ENCODE measurements at regions of chr19 and their contacts with region 1.

Region 1: GRCh38 chr19:45178262-45179071 is at the start of gene BLOC1S3:
- DNase-seq: peak; percentile 100
- ATAC-seq: peak; percentile 96 to 98 (median 98)
- H3K4me3 ChIP-seq: peak within 1 kb of the TSS; percentile 62 to 96 (median 83)
- H3K27ac ChIP-seq: peak within 1 kb of the TSS; percentile 55 to 93 (median 87)
- H3K4me1 ChIP-seq: peaks cover 3 to 43% (median 31%) of the 10 kb centered on the region in 9 donors
- H3K27me3 ChIP-seq: no peaks in the 10 kb centered on the region
- CTCF ChIP-seq: peak in 8 of 9 donors; percentile 44 to 72 (median 53)
- total RNA-seq, gene BLOC1S3: 2.8 to 8.6 (median 4.8) TPM

Region 2: DNA sequence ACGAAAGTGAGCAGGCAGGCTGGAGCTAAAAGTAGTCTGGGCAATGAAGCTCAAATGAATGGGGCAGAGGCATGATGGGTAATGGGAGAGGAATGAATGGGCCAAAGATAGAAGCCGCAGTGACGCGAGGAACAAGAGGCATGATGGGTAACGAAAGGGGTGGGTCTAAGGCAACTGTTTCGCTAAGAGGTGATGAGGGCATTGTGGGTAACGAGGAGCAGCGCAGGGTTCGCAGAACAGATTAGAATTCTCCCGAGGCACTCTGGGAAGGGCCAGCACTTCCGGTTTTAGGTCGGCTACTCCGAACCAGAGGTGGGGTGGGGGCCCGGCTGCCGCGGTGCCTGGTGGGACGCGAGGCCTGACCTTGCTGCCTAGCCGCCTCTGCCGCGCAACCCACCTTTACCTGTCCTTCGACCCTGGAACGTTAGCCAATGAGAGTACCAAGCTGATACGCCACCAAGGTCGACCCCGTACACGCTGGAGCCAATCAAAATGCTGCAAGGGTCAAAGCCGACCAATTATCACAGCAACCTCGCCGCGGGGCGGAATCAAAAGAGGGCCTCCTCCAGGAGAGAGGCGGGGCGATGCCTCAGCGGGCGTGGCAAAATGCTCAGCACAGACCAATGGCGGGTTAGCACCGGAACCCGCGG is 288.0 kb before region 1 on chr19:
- intact Hi-C with region 1: loop called in 1 of 10 experiments (anchors 10 kb)
- DNase-seq: peak; percentile 100
- ATAC-seq: peak; percentile 88 to 96 (median 94)
- H3K4me3 ChIP-seq: peak overlapping the region; percentile 16 to 87 (median 58)
- H3K27ac ChIP-seq: peak overlapping the region; percentile 81 to 98 (median 92)
- H3K4me1 ChIP-seq: peaks cover 13 to 28% (median 25%) of the 10 kb centered on the region in 9 donors
- H3K27me3 ChIP-seq: no peaks in the 10 kb centered on the region
- CTCF ChIP-seq: no peak

Region 3: DNA sequence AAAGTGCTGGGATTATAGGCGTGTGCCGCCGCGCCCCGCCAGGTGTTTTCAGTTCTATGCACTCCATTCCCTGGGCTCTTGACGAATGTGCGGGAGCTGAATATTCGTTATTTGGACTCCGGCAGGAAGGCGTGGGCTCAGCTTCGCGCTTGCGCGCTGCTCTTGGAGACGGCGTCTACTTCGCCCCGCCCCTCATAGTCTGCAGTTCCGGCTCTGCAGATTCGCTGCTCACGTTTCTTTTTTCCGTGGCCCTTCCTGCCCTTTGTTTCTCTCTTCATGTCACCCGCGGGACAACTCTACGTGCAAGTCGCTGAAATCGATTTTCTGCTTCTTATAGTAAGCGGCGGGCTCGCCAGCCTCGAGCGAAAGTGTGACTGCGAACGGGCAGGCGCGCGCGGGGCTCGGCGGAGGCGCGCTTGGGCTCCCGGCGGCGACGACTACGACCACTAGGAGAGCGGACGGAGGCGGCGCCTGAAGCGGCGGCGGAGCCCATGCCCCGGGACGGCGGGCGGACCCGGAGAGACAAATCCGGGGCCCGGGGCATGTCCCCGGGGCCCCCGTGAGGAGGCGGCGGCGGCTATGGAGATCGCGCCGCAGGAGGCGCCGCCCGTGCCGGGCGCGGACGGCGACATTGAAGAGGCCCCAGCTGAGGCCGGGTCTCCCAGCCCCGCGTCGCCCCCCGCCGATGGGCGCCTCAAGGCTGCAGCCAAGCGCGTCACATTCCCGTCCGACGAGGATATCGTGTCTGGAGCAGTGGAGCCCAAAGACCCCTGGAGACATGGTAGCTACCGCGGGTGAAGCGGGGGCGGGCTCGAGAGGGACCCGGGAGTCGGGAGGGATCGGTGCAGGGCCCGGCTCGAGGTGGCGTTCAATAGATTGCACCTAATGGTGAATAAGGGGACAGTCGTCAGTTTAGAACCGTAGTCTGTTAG is 85.5 kb before region 1 on chr19 and contains the start of gene PPP1R37:
- intact Hi-C with region 1: loop called in 4 of 10 experiments (anchors 1 to 10 kb)
- DNase-seq: peak; percentile 93 to 95
- ATAC-seq: peak; percentile 89 to 96 (median 92)
- H3K4me3 ChIP-seq: peak within 1 kb of the TSS; percentile 77 to 99 (median 92)
- H3K27ac ChIP-seq: peak within 1 kb of the TSS; percentile 23 to 97 (median 88)
- H3K4me1 ChIP-seq: peaks cover 14 to 66% (median 52%) of the 10 kb centered on the region in 9 donors
- H3K27me3 ChIP-seq: no peaks in the 10 kb centered on the region
- CTCF ChIP-seq: peak in 8 of 9 donors; percentile 15 to 57 (median 40)
- total RNA-seq, gene PPP1R37: 12.5 to 19.2 (median 15.8) TPM

Region 4: DNA sequence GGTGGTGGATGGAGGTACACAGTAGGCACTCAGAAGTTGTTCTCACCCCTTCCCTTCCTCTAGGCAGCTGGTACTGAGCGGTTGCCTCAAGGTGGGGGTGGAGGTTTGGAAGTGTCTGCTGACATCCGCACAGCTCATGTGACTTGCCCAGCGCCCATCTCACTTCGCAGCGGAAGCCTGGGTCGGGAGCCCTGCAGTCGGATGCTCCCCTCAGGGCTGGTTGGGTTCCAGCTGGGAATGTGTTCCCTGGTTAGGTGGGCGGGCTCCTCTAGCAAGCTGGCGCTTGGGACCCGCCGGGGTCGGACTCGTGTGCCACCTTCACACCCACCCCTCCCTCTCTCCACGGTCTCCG is 75.3 kb before region 1 on chr19:
- intact Hi-C with region 1: loop called in 2 of 10 experiments (anchors 5 to 10 kb)
- DNase-seq: no peak
- ATAC-seq: peak; percentile 8 to 51 (median 38)
- H3K4me3 ChIP-seq: peak overlapping the region in 5 of 10 donors; percentile 16 to 34 (median 28)
- H3K27ac ChIP-seq: peak overlapping the region in 8 of 10 donors; percentile 5 to 75 (median 54)
- H3K4me1 ChIP-seq: peaks cover 12 to 76% (median 54%) of the 10 kb centered on the region in 9 donors
- H3K27me3 ChIP-seq: no peaks in the 10 kb centered on the region
- CTCF ChIP-seq: no peak

Region 5: DNA sequence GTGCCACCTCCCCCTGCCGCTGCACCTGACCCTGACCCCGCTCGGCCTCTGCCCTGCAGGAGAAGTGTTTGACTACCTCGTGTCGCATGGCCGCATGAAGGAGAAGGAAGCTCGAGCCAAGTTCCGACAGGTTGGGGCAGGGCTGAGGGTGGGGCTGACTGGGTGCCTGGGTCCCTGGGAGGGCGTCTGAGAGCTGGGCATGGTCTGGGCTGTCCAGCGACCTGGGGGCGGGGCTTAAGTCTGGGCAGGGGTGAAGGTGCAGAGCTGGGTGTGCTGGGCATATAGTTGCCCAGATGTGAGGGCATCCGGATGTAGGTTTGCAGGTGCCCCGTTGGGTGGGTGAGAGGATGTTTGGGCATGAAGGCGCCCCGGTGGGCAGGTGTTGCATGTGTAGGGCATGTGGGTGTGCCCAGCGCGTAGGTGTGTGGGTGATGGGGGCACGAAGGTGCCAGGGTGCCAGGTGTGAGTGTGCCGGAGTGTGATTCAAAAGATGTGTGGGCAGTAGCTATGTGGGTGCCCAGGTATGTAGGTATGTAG is 86.4 kb after region 1 on chr19:
- intact Hi-C with region 1: no loop called
- DNase-seq: no peak
- ATAC-seq: peak in 1 of 8 donors; percentile 37
- H3K4me3 ChIP-seq: no peak overlapping the region
- H3K27ac ChIP-seq: no peak overlapping the region
- H3K4me1 ChIP-seq: no peaks in the 10 kb centered on the region
- H3K27me3 ChIP-seq: no peaks in the 10 kb centered on the region
- CTCF ChIP-seq: no peak

Region 6: DNA sequence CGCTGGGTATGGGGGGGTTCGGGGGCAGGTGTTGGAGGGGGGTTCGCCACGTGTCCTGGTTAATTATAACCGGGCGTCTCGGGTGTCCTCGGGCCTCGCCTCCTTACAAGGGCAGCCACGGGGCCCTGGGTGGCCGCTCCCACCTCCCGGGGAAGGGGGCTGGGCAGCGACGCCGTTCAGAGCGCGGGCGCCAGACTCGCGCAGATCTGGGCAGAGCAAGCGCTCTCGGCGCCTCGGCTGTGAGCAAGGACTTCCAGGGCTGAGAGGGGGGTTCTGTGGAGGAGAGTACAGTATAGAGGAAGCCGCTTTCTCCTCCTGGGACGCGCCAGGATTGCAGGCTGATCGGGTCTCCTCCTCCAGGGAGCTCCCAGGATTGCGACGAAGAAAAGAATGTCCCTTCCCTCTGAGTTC is 145.2 kb after region 1 on chr19:
- intact Hi-C with region 1: no loop called
- DNase-seq: peak; percentile 74 to 76
- ATAC-seq: peak; percentile 68 to 82 (median 75)
- H3K4me3 ChIP-seq: peak overlapping the region in 9 of 10 donors; percentile 39 to 64 (median 59)
- H3K27ac ChIP-seq: peak overlapping the region; percentile 79 to 99 (median 96)
- H3K4me1 ChIP-seq: peaks cover 0 to 46% (median 8%) of the 10 kb centered on the region in 9 donors
- H3K27me3 ChIP-seq: peaks cover 0 to 30% (median 17%) of the 10 kb centered on the region in 7 donors
- CTCF ChIP-seq: no peak

Measured in heart right ventricle (tissue), 16 donors.